ENCODE measurements at regions of chr19 and their contacts with region 1.

Region 1: DNA sequence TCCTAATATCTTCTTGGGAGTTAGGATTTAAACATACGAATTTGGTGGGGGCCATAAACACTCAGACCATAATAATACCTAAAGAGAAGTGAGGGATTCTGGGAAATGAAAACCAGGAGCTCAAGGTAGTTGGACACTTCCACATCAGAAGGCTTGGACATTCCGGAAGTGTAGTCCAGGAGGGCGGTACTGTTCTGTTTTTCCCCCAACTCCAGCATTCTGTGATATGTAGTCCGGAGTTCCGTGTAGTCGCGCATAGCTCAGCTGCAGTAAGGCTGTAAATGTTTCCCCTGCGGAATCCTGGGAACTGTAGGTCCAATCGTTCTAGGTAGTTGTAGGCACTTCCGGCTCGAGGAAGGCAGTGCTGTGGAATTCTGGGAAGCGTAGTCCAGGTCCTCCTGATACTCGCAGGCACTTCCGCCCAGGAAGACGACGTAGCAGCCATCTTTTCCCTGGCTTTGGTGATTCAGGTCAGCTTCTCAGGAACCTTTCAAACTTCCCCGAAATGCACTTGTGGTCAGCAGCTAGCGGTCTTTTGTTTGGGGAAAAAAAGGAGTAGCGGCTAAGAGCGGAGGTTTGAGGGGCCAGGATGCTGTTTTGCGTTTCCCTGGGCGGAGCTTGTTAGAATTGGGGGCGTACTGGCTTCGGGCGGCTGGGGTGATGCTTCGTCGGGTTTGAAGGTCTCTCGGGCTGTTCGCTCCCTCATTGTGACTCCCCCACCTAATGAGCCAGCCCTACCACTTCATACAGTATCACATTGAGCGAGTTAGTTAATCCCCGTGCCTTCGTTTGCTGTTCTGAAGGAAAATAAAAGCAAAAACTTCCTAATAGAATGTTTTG is at the start of gene ZNF226:
- DNase-seq: peak; percentile 89
- ATAC-seq: peak; percentile 95
- H3K4me3 ChIP-seq: peak within 1 kb of the TSS; percentile 72 to 99 (median 88)
- H3K4me3 Mint-ChIP-seq: peak within 1 kb of the TSS; percentile 98
- H3K27ac ChIP-seq: peak within 1 kb of the TSS; percentile 73 to 83
- H3K27ac Mint-ChIP-seq: peak within 1 kb of the TSS; percentile 98
- H3K4me1 ChIP-seq: peaks cover 11 to 16% of the 10 kb centered on the region in 2 donors
- H3K4me1 Mint-ChIP-seq: peaks cover 31% of the 10 kb centered on the region
- H3K27me3 ChIP-seq: no peaks in the 10 kb centered on the region
- H3K27me3 Mint-ChIP-seq: no peaks in the 10 kb centered on the region
- CTCF ChIP-seq: no peak
- total RNA-seq, gene ZNF226: 55.8 and 58.8 TPM in 2 replicates

Region 2: GRCh38 chr19:44025217-44025936 is 139.5 kb before region 1 on chr19 and contains the start of gene ZNF222:
- CTCF ChIA-PET with region 1: no interaction called
- POLR2A ChIA-PET with region 1: no interaction called
- intact Hi-C with region 1: loop called (anchors 1 kb)
- DNase-seq: peak; percentile 83
- ATAC-seq: peak; percentile 97
- H3K4me3 ChIP-seq: peak within 1 kb of the TSS; percentile 72 to 98 (median 84)
- H3K4me3 Mint-ChIP-seq: peak within 1 kb of the TSS; percentile 96
- H3K27ac ChIP-seq: peak within 1 kb of the TSS; percentile 38 to 66
- H3K27ac Mint-ChIP-seq: peak within 1 kb of the TSS; percentile 88
- H3K4me1 ChIP-seq: peaks cover 11 to 13% of the 10 kb centered on the region in 2 donors
- H3K4me1 Mint-ChIP-seq: peaks cover 19% of the 10 kb centered on the region
- H3K27me3 ChIP-seq: no peaks in the 10 kb centered on the region
- H3K27me3 Mint-ChIP-seq: peaks cover 8% of the 10 kb centered on the region
- CTCF ChIP-seq: no peak
- total RNA-seq, gene ZNF222: 7.5 and 9.1 TPM in 2 replicates

Region 3: GRCh38 chr19:44093931-44094765 is 70.7 kb before region 1 on chr19 and contains the start of gene ZNF224:
- CTCF ChIA-PET with region 1: no interaction called
- POLR2A ChIA-PET with region 1: no interaction called
- intact Hi-C with region 1: loop called (anchors 1 kb)
- DNase-seq: peak; percentile 87
- ATAC-seq: peak; percentile 94
- H3K4me3 ChIP-seq: peak within 1 kb of the TSS; percentile 67 to 95 (median 89)
- H3K4me3 Mint-ChIP-seq: peak within 1 kb of the TSS; percentile 96
- H3K27ac ChIP-seq: peak within 1 kb of the TSS; percentile 39 to 70
- H3K27ac Mint-ChIP-seq: peak within 1 kb of the TSS; percentile 90
- H3K4me1 ChIP-seq: peaks cover 4 to 9% of the 10 kb centered on the region in 2 donors
- H3K4me1 Mint-ChIP-seq: peaks cover 22% of the 10 kb centered on the region
- H3K27me3 ChIP-seq: no peaks in the 10 kb centered on the region
- H3K27me3 Mint-ChIP-seq: no peaks in the 10 kb centered on the region
- CTCF ChIP-seq: no peak
- total RNA-seq, gene ZNF224: 94.2 and 96.1 TPM in 2 replicates

Region 4: GRCh38 chr19:44141191-44142058 is 23.5 kb before region 1 on chr19 and contains the start of gene ZNF234:
- CTCF ChIA-PET with region 1: no interaction called
- POLR2A ChIA-PET with region 1: interaction called, 4 read pairs
- intact Hi-C with region 1: loop called (anchors 1 kb)
- DNase-seq: peak; percentile 81
- ATAC-seq: peak; percentile 95
- H3K4me3 ChIP-seq: peak within 1 kb of the TSS; percentile 64 to 93 (median 81)
- H3K4me3 Mint-ChIP-seq: peak within 1 kb of the TSS; percentile 93
- H3K27ac ChIP-seq: peak within 1 kb of the TSS; percentile 61 to 77
- H3K27ac Mint-ChIP-seq: peak within 1 kb of the TSS; percentile 87
- H3K4me1 ChIP-seq: peaks cover 13 to 15% of the 10 kb centered on the region in 2 donors
- H3K4me1 Mint-ChIP-seq: peaks cover 27% of the 10 kb centered on the region
- H3K27me3 ChIP-seq: no peaks in the 10 kb centered on the region
- H3K27me3 Mint-ChIP-seq: no peaks in the 10 kb centered on the region
- CTCF ChIP-seq: no peak
- total RNA-seq, gene ZNF234: 24.1 and 27.5 TPM in 2 replicates

Region 5: DNA sequence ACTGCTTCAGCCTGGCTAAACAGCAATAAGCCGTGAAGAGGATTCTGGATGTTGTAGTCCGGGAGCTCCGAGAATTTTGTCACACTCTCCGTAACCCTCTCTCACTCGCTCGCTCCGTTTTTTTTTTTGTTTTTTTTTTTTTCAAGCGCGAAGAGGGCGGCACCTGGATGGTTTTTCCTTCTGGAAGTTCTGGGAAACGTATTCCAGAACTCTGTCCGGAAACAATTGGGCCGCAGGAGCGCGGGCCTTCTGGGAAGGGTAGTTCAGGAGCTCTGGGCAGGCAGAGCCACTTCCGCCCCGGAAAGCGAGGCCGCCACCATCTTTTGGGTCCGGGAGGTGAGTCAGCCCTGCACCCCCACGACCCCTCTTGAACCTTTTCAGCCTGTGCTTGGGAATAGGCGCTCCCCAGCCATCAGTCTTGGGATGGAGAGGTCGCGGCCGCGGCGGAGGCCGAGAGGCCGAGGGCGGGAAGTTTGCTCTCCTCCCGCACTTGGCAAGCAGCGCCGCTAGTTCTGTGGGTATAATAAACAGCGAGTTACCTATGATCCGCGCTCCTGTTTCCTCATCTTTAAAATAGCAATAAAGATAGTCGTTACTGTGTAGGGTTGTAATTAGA is 47.5 kb after region 1 on chr19 and contains the start of gene ZNF227:
- CTCF ChIA-PET with region 1: no interaction called
- POLR2A ChIA-PET with region 1: no interaction called
- intact Hi-C with region 1: loop called (anchors 1 kb)
- DNase-seq: peak; percentile 85
- ATAC-seq: peak; percentile 94
- H3K4me3 ChIP-seq: peak within 1 kb of the TSS; percentile 85 to 93 (median 88)
- H3K4me3 Mint-ChIP-seq: peak within 1 kb of the TSS; percentile 96
- H3K27ac ChIP-seq: peak within 1 kb of the TSS; percentile 48 to 77
- H3K27ac Mint-ChIP-seq: peak within 1 kb of the TSS; percentile 93
- H3K4me1 ChIP-seq: peaks cover 14 to 15% of the 10 kb centered on the region in 2 donors
- H3K4me1 Mint-ChIP-seq: peaks cover 21% of the 10 kb centered on the region
- H3K27me3 ChIP-seq: no peaks in the 10 kb centered on the region
- H3K27me3 Mint-ChIP-seq: no peaks in the 10 kb centered on the region
- CTCF ChIP-seq: no peak
- total RNA-seq, gene ZNF227: 49.5 and 53.0 TPM in 2 replicates

Region 6: GRCh38 chr19:44278181-44278690 is 113.3 kb after region 1 on chr19:
- CTCF ChIA-PET with region 1: no interaction called
- POLR2A ChIA-PET with region 1: no interaction called
- intact Hi-C with region 1: no loop called
- DNase-seq: no peak
- ATAC-seq: no peak
- H3K4me3 ChIP-seq: no peak overlapping the region
- H3K4me3 Mint-ChIP-seq: no peak overlapping the region
- H3K27ac ChIP-seq: no peak overlapping the region
- H3K27ac Mint-ChIP-seq: no peak overlapping the region
- H3K4me1 ChIP-seq: no peaks in the 10 kb centered on the region
- H3K4me1 Mint-ChIP-seq: no peaks in the 10 kb centered on the region
- H3K27me3 ChIP-seq: no peaks in the 10 kb centered on the region
- H3K27me3 Mint-ChIP-seq: no peaks in the 10 kb centered on the region
- CTCF ChIP-seq: no peak

Region 7: DNA sequence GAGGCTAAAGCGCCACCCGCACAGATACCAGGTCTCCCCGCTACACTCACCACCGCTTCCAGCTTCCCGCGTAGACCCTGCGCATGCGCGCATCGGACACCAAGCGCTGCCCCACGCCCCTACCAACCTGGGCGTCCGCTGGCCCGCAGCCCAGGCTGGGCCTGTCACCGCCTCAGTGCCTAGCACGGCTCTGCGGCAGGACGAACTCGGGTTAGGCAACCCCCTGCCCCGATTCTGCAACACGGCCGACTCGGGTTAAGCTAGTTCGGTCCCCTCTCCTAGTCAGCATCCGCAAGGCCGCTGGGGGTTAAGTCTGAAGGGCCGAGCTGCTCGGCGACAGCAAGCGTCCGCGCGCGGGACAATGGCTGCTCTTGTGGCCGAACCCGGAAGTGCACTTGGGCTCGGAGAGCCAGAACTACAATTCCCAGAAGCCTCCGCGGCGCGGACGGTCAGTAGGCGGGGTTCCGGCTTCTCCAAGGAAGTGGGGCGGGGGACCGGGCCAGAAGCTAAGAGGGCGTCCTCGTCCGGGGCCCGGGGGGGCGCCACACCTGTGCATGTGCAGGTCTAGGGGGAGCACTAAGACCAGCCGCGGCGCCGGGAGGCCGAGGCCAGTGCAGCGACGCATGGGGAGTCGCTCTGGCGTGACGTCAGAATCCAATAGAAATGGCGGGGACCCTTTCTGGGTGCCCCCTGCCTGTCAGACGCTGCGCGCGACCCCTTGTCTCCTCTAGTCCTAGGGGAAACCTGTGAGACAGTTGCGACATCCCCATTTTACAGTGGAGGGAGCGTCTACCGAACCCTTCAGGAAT is 335.5 kb after region 1 on chr19 and contains the start of gene ZNF180:
- CTCF ChIA-PET with region 1: no interaction called
- POLR2A ChIA-PET with region 1: interaction called, 3 read pairs
- intact Hi-C with region 1: loop called (anchors 1 kb)
- DNase-seq: peak; percentile 98
- ATAC-seq: peak; percentile 93
- H3K4me3 ChIP-seq: peak within 1 kb of the TSS; percentile 70 to 99 (median 93)
- H3K4me3 Mint-ChIP-seq: peak within 1 kb of the TSS; percentile 99
- H3K27ac ChIP-seq: peak within 1 kb of the TSS; percentile 52 to 84
- H3K27ac Mint-ChIP-seq: peak within 1 kb of the TSS; percentile 92
- H3K4me1 ChIP-seq: peaks cover 13 to 25% of the 10 kb centered on the region in 2 donors
- H3K4me1 Mint-ChIP-seq: peaks cover 29% of the 10 kb centered on the region
- H3K27me3 ChIP-seq: peaks cover 0 to 5% (median 2%) of the 10 kb centered on the region in 4 experiments
- H3K27me3 Mint-ChIP-seq: peaks cover 14% of the 10 kb centered on the region
- CTCF ChIP-seq: peak; percentile 56
- total RNA-seq, gene ZNF180: 16.1 and 19.6 TPM in 2 replicates

Measured in B cell (primary cell).